ENCODE measurements at regions of chr12 and their contacts with region 1.

Region 1: DNA sequence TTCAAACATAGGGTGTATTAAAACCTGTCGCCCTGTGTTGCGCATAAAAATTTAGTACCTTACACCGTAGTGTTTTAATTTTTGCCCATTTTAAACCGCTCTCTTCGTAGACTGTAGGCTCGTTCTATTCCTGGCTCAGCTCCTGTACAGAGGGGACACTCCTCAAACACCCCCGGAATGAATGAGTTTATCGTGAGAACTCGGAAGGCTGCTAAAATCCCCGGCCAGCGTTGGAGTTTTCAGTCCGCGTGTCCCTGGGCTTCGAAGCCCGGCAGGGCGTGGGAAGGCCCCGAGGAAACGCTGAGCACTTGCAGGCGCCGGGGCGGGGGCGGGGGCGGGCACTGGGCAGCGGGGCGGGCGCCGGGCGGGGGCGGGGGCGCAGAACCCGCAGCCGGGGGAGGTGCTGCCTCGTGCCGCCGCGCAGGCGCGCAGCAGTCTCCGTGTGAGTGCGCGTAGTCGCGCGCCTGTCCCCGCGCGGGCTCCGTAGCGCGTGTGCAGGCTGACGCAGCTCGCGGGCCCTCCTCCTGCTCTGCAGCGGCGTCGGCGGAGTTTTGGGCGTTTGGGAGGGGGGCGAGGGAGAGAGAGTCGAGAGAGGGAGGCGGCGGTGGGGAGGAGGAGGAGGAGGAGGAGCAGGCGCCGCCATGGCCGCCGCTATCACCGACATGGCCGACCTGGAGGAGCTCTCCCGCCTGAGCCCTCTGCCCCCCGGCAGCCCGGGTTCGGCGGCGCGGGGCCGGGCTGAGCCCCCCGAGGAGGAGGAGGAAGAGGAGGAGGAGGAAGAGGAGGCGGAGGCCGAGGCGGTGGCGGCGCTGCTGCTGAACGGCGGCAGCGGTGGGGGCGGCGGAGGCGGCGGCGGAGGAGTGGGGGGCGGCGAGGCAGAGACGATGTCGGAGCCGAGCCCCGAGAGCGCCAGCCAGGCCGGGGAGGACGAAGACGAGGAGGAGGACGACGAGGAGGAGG is at the start of gene AEBP2:
- DNase-seq: peak; percentile 93
- H3K4me3 Mint-ChIP-seq: peak within 1 kb of the TSS; percentile 99
- H3K27ac Mint-ChIP-seq: peak within 1 kb of the TSS; percentile 94
- H3K4me1 Mint-ChIP-seq: peaks cover 48% of the 10 kb centered on the region
- H3K27me3 Mint-ChIP-seq: no peaks in the 10 kb centered on the region
- total RNA-seq, gene AEBP2: 48.8 to 50.6 TPM

Region 2: GRCh38 chr12:19482551-19483109 is 43.3 kb after region 1 on chr12:
- CTCF ChIA-PET with region 1: no interaction called
- POLR2A ChIA-PET with region 1: interaction called, 12 read pairs
- DNase-seq: peak; percentile 69
- H3K4me3 Mint-ChIP-seq: peak overlapping the region; percentile 25
- H3K27ac Mint-ChIP-seq: peak overlapping the region; percentile 85
- H3K4me1 Mint-ChIP-seq: peaks cover 53% of the 10 kb centered on the region
- H3K27me3 Mint-ChIP-seq: no peaks in the 10 kb centered on the region

Region 3: GRCh38 chr12:19553175-19553574 is 113.8 kb after region 1 on chr12:
- CTCF ChIA-PET with region 1: no interaction called
- POLR2A ChIA-PET with region 1: interaction called, 13 read pairs
- DNase-seq: no peak
- H3K4me3 Mint-ChIP-seq: peak overlapping the region; percentile 69
- H3K27ac Mint-ChIP-seq: peak overlapping the region; percentile 92
- H3K4me1 Mint-ChIP-seq: peaks cover 31% of the 10 kb centered on the region
- H3K27me3 Mint-ChIP-seq: no peaks in the 10 kb centered on the region